GM13976 (cell line): ENCODE measurements at regions of chr11 and their contacts with region 1.

Region 1: GRCh38 chr11:102614485-102614884 is 10.6 kb downstream of the MMP20 start:
- DNase-seq: no peak
- CTCF ChIP-seq: peak; percentile 23

Region 2: DNA sequence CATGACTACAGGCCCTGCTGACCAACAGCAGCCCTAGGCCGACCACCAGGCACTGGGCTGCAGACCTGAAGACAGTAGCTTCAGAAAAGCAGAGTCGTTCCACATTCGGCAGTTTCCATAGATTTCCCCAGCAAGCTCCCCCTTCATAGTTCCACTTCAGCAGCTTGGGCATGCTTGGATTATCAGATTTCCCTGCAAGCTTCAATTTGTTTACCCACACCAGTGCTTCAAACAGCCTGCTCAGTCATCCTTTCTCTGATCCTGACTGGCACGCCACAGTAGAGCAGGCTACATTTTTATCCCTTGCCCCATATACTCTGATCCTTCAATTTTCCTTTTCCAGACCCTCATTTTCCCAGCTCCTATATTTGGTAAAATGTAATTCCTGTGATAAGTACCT is 618.4 kb before region 1 on chr11:
- in situ Hi-C with region 1: no loop called
- DNase-seq: no peak
- CTCF ChIP-seq: no peak

Region 3: DNA sequence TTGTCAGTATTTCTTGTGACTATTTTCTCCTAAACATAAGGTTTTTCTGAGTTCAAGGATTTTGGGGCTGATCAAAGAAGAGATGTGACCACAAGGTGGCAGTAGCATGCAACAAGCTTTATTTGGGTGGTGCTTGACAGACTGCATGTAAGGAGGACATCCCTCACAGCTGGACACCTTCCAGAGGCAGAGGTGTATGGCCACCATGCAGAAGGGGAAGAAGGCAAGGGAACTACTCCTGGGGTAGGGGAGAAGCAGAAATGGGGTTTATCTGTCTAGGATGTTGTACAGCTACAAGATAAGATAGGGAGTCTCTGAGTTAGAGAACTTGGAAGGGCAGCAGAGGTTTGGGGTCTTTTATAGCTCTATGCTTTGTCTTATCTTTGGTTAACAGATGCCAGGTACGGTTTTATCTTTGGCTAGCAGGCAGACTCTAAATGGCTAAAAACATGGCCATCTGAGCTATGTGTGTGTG is 272.6 kb before region 1 on chr11:
- in situ Hi-C with region 1: loop called (anchors 5 kb)
- DNase-seq: peak; percentile 58
- CTCF ChIP-seq: peak; percentile 87